Mammary epithelial cell (primary cell): ENCODE measurements at regions of chr11 and their contacts with region 1.

Region 1: GRCh38 chr11:118572061-118572980 is at the start of gene ARCN1:
- DNase-seq: peak; percentile 53
- H3K4me3 ChIP-seq: peak within 1 kb of the TSS; percentile 77 to 100 (median 80)
- H3K27ac ChIP-seq: peak within 1 kb of the TSS; percentile 85
- H3K4me1 ChIP-seq: no peaks in the 10 kb centered on the region
- H3K27me3 ChIP-seq: no peaks in the 10 kb centered on the region
- CTCF ChIP-seq: no peak
- total RNA-seq, gene ARCN1: 115 to 155 TPM

Region 2: DNA sequence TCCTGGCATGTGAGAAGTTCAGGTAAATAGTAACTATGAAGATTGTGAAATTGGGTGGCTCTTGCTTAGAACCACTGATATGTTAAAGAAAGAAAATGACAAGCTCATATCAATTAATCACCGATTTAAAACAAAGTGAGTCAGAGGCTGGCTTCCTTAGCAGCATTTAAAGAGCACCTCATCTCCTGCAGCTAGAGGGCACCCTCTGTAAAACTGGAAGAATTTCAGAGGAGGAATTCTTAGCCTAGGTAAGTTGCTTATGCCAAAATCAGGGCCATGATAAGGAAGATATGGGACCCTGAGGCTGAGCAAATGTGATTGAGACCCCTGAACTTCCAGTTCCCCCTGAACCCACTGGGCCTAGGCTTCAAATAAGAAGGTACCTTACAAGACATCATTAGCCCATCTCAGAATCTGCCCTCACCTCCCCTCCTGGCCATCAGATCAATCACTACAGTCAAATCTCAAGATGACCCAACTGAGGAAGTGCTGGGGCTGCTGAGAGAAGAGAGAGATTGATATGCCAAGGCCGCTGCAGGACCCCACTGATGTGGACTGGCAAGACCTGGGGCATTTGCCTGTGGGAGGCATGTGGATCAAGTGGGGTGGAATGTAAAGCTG is 276.4 kb before region 1 on chr11:
- CTCF ChIA-PET with region 1: no interaction called
- dilution Hi-C with region 1: no loop called
- in situ Hi-C with region 1: no loop called
- intact Hi-C with region 1: loop called (anchors 2 kb)
- DNase-seq: peak; percentile 74
- H3K4me3 ChIP-seq: no peak overlapping the region
- H3K27ac ChIP-seq: no peak overlapping the region
- H3K4me1 ChIP-seq: peaks cover 14% of the 10 kb centered on the region
- H3K27me3 ChIP-seq: no peaks in the 10 kb centered on the region
- CTCF ChIP-seq: peak; percentile 77 to 87

Region 3: DNA sequence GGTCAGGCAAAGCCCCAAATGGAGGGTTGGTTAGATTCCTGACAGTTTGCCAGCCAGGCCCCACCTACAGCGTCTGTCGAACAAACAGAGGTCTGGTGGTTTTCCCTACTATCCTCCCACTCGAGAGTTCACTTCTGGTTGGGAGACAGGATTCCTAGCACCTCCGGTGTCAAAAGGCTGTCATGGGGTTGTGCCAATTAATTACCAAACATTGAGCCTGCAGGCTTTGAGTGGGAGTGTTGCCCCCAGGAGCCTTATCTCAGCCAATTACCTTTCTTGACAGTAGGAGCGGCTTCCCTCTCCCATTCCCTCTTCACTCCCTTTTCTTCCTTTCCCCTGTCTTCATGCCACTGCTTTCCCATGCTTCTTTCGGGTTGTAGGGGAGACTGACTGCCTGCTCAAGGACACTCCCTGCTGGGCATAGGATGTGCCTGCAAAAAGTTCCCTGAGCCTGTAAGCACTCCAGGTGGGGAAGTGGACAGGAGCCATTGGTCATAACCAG is 49.7 kb before region 1 on chr11:
- CTCF ChIA-PET with region 1: interaction called, 7 read pairs
- dilution Hi-C with region 1: loop called (anchors 5 kb)
- in situ Hi-C with region 1: no loop called
- intact Hi-C with region 1: loop called (anchors 2 kb)
- DNase-seq: peak; percentile 26
- H3K4me3 ChIP-seq: no peak overlapping the region
- H3K27ac ChIP-seq: no peak overlapping the region
- H3K4me1 ChIP-seq: no peaks in the 10 kb centered on the region
- H3K27me3 ChIP-seq: no peaks in the 10 kb centered on the region
- CTCF ChIP-seq: peak; percentile 40 to 58

Region 4: DNA sequence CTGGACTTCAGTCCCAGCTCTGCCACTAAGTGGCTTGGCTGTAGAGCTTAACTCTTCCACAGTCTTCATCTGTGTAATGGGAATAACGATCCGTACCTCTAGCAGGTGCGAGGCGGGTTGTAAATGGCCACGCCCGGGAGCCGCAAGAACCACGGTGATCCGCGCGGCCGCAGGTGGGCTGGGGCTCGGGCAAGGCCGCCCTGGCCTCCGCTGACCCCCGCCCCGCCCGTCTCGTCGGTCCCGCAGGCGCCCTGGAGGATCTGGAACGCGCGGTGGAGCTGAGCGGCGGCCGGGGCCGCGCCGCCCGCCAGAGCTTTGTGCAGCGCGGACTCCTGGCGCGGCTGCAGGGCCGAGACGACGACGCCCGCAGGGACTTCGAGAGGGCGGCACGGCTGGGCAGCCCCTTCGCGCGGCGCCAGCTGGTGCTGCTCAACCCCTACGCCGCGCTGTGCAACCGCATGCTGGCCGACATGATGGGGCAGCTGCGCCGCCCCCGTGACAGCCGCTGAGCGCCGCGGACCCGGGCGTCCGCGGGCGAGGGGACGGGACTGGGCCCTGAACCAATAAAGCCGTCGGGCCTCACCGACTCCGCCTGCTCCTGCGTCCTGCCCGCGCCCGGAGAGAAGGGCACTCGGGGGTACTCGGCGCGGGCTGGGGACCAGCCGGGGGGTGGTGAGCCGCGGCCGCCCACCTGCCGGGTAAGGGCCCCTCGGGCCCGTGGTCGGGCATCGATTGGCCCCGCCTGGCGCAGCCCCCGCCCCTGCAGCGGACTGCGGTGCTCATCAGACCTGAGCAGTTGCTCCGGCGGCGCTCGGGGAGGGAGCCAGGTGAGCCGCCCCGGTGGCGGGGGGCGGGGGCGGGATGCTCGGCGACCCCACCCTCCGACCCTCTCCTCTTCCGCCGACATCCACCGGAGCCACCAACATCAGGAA is 41.6 kb before region 1 on chr11 and contains the start of gene TMEM25:
- CTCF ChIA-PET with region 1: no interaction called
- dilution Hi-C with region 1: loop called (anchors 5 kb)
- in situ Hi-C with region 1: no loop called
- intact Hi-C with region 1: no loop called
- DNase-seq: peak; percentile 57
- H3K4me3 ChIP-seq: peak within 1 kb of the TSS; percentile 58 to 75 (median 70)
- H3K27ac ChIP-seq: no peak within 1 kb of the TSS
- H3K4me1 ChIP-seq: peaks cover 14% of the 10 kb centered on the region
- H3K27me3 ChIP-seq: no peaks in the 10 kb centered on the region
- CTCF ChIP-seq: no peak
- total RNA-seq, gene TMEM25: 17.2 to 46.8 TPM